ENCODE measurements at regions of chr4 and their contacts with region 1.

Region 1: DNA sequence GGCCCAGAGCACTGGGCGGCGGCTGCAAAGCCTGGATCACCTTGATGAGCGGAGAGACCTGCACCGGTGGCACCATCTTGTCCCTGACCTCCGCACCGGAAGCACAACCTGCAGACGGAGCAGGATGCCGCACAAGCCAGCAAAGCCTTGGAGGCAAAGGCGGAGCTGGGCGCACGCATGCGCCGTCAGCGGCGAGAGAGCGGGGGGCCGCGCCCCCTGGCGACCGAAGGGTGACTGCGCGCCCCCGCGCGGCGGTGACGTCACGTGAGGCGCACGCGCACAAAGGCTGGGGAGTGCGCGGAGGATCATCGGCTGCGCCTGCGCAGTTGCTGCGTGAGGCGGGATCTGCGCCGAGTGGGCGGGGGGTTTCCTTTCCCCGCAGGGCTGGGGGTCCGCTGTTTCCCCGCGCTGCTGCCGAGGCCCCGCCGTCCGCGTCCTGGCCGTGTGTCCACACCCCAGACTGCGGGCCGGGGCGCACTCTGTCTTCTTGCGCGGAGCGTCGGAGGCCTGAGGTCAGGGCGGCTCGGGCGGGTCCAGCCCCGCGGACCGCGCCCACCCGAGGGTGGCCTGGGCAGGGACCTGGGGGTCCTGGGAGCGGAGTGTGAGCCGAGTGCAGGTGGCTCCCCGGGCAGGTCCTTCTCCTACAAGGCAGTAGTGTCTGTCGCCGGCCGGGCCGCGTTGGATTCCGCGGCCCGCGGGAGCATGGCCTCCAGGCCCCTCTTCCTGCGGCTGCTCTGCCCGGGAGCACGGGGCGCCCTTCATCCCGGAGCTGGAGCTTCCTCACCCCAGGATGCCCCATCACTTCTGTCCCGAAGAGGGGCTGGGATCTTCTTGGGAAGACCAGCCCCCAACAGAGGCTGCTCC is at the starts of genes ATP5ME and MYL5:
- DNase-seq: peak; percentile 97 to 99 (median 99)
- H3K4me3 ChIP-seq: peak within 1 kb of the TSS; percentile 78
- H3K4me3 Mint-ChIP-seq: peak within 1 kb of the TSS; percentile 82 to 95 (median 90)
- H3K27ac ChIP-seq: peak within 1 kb of the TSS; percentile 98
- H3K27ac Mint-ChIP-seq: peak within 1 kb of the TSS; percentile 83 to 96 (median 86)
- H3K4me1 ChIP-seq: peaks cover 19% of the 10 kb centered on the region
- H3K4me1 Mint-ChIP-seq: peaks cover 6 to 17% (median 9%) of the 10 kb centered on the region in 3 donors
- H3K27me3 ChIP-seq: no peaks in the 10 kb centered on the region
- H3K27me3 Mint-ChIP-seq: no peaks in the 10 kb centered on the region
- total RNA-seq, gene ATP5ME: 284 to 291 TPM
- total RNA-seq, gene MYL5: 17.1 to 19.5 TPM

Region 2: DNA sequence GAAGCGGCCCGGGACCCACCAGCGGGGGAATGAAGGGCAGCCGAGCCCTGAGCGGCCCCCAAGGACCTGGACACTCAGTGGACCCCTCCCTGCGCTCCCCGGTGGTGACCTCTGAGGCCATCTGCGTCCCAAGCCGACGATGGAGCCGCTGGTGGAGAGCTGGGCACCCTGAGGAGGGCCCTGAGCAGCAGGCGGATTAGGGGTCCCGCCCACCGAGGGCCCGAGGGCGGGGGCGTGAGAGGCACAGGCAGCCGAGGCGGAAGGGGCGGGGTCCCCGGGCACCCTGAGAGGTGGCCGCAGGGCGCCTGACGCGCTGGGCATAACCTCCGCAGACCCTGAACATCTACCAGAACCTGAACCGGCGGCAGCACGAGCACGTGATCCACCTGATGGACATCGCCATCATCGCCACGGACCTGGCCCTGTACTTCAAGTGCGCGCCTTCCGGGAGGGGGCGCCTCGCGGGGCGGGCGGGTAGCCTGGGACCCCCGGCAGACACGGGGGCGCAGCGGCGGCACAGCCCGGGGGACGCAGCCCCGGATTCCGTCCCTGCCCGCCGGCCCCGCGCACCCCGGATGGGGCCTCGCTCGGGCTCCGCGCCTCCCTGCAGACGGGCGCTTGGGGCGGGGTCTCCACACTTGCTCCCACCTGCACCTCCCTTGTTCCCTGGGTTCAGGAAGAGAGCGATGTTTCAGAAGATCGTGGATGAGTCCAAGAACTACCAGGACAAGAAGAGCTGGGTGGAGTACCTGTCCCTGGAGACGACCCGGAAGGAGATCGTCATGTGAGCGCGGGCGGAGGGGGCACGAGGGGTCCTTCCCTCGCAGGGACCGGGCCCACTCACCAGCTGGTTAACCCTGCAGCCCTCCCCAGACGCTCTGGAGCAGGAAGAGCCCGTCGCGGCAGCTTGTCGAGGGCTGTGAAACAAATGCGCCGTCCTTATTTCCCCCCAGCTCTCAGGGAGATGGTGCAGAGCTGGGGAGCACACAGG is 10.7 kb before region 1 on chr4:
- CTCF ChIA-PET with region 1: interaction called, 19 read pairs
- POLR2A ChIA-PET with region 1: interaction called, 21 read pairs
- DNase-seq: peak; percentile 71 to 87 (median 74)
- H3K4me3 ChIP-seq: peak overlapping the region; percentile 75
- H3K4me3 Mint-ChIP-seq: peak overlapping the region; percentile 78 to 91 (median 85)
- H3K27ac ChIP-seq: peak overlapping the region; percentile 68
- H3K27ac Mint-ChIP-seq: peak overlapping the region; percentile 50 to 98 (median 81)
- H3K4me1 ChIP-seq: peaks cover 11% of the 10 kb centered on the region
- H3K4me1 Mint-ChIP-seq: peaks cover 9 to 23% (median 9%) of the 10 kb centered on the region in 3 donors
- H3K27me3 ChIP-seq: no peaks in the 10 kb centered on the region
- H3K27me3 Mint-ChIP-seq: peaks cover 0 to 2% of the 10 kb centered on the region in 2 donors

Region 3: GRCh38 chr4:705278-706082 is 31.1 kb after region 1 on chr4 and contains the start of gene PCGF3:
- CTCF ChIA-PET with region 1: no interaction called
- POLR2A ChIA-PET with region 1: no interaction called
- DNase-seq: peak; percentile 91 to 97 (median 95)
- H3K4me3 ChIP-seq: peak within 1 kb of the TSS; percentile 76
- H3K4me3 Mint-ChIP-seq: peak within 1 kb of the TSS; percentile 78 to 90 (median 84)
- H3K27ac ChIP-seq: peak within 1 kb of the TSS; percentile 93
- H3K27ac Mint-ChIP-seq: peak within 1 kb of the TSS; percentile 15 to 93 (median 80)
- H3K4me1 ChIP-seq: peaks cover 13% of the 10 kb centered on the region
- H3K4me1 Mint-ChIP-seq: peaks cover 17 to 34% (median 21%) of the 10 kb centered on the region in 3 donors
- H3K27me3 ChIP-seq: no peaks in the 10 kb centered on the region
- H3K27me3 Mint-ChIP-seq: no peaks in the 10 kb centered on the region
- total RNA-seq, gene PCGF3: 24.7 to 26.1 TPM

Measured in CD8-positive, alpha-beta memory T cell (primary cell).